K562 (cell line): ENCODE measurements at regions of chr17 and their contacts with region 1.

Region 1: GRCh38 chr17:51000835-51001638 is 119.6 kb downstream of the SPAG9 start:
- DNase-seq: peak in 2 of 4 experiments; percentile 23 to 59
- ATAC-seq: peak; percentile 83
- H3K4me3 ChIP-seq: no peak overlapping the region
- H3K27ac ChIP-seq: no peak overlapping the region
- H3K4me1 ChIP-seq: no peaks in the 10 kb centered on the region
- H3K27me3 ChIP-seq: no peaks in the 10 kb centered on the region
- CTCF ChIP-seq: peak in 2 of 3 experiments; percentile 11 to 63; a peak in 3 of 6 replicates
- EP300 ChIP-seq: no peak
- POLR2A ChIP-seq: no peak
- RAD21 ChIP-seq: peak; percentile 72 to 78

Region 2: GRCh38 chr17:50956750-50957523 is 44.1 kb before region 1 on chr17:
- CTCF ChIA-PET with region 1: no interaction called
- POLR2A ChIA-PET with region 1: no interaction called
- in situ Hi-C with region 1: no loop called
- intact Hi-C with region 1: no loop called
- DNase-seq: peak; percentile 73 to 78 (median 76)
- ATAC-seq: peak; percentile 95
- H3K4me3 ChIP-seq: no peak overlapping the region
- H3K27ac ChIP-seq: no peak overlapping the region
- H3K4me1 ChIP-seq: peaks cover 0 to 14% of the 10 kb centered on the region in 2 experiments; a peak in 3 of 5 replicates
- H3K27me3 ChIP-seq: no peaks in the 10 kb centered on the region
- CTCF ChIP-seq: peak; percentile 78 to 92 (median 79)
- EP300 ChIP-seq: no peak
- POLR2A ChIP-seq: no peak
- RAD21 ChIP-seq: peak; percentile 68 to 76

Region 3: GRCh38 chr17:51056813-51057510 is 55.9 kb after region 1 on chr17:
- CTCF ChIA-PET with region 1: no interaction called
- POLR2A ChIA-PET with region 1: no interaction called
- in situ Hi-C with region 1: no loop called
- intact Hi-C with region 1: loop called (anchors 2 kb)
- DNase-seq: peak; percentile 19 to 55 (median 29)
- ATAC-seq: peak; percentile 86
- H3K4me3 ChIP-seq: no peak overlapping the region
- H3K27ac ChIP-seq: peak overlapping the region; percentile 58; the same call in 2 of the 3 replicates
- H3K4me1 ChIP-seq: no peaks in the 10 kb centered on the region; a peak in 2 of 5 replicates
- H3K27me3 ChIP-seq: no peaks in the 10 kb centered on the region
- CTCF ChIP-seq: peak; percentile 15 to 64 (median 43); a peak in 3 of 6 replicates
- EP300 ChIP-seq: no peak
- POLR2A ChIP-seq: no peak
- RAD21 ChIP-seq: peak; percentile 29 to 49; a peak in 2 of 4 replicates

Region 4: DNA sequence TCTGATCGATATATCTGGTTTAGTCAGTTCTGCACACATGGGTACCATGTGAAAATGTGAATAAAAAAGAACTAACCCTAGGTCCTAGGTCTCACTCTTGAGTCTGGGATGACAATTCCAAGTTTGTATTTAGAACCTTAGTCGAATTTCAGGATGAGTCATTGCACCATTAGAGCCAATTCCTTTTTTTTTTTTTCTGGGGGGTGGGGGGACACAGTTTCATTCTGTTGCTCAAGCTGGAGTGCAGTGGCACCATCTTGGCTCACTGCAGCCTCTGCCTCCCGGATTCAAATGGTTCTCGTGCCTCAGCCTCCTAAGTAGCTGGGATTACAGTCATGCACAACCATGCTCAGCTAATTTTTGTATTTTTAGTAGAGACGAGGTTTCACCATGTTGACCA is 78.0 kb after region 1 on chr17:
- CTCF ChIA-PET with region 1: no interaction called
- POLR2A ChIA-PET with region 1: no interaction called
- in situ Hi-C with region 1: no loop called
- intact Hi-C with region 1: no loop called
- DNase-seq: no peak
- ATAC-seq: no peak
- H3K4me3 ChIP-seq: no peak overlapping the region
- H3K27ac ChIP-seq: no peak overlapping the region
- H3K4me1 ChIP-seq: no peaks in the 10 kb centered on the region
- H3K27me3 ChIP-seq: no peaks in the 10 kb centered on the region
- CTCF ChIP-seq: no peak
- EP300 ChIP-seq: no peak
- POLR2A ChIP-seq: no peak
- RAD21 ChIP-seq: no peak

Region 5: GRCh38 chr17:51147650-51148049 is 146.6 kb after region 1 on chr17:
- CTCF ChIA-PET with region 1: interaction called, 31 read pairs
- POLR2A ChIA-PET with region 1: interaction called, 3 read pairs
- in situ Hi-C with region 1: loop called (anchors 5 kb)
- intact Hi-C with region 1: no loop called
- DNase-seq: no peak
- ATAC-seq: no peak
- H3K4me3 ChIP-seq: no peak overlapping the region
- H3K27ac ChIP-seq: 0 out of 3 replicates have a peak overlapping the region, but pooled peaks have one; percentile 22
- H3K4me1 ChIP-seq: peaks cover 7 to 8% of the 10 kb centered on the region in 2 experiments; a peak in 3 of 5 replicates
- H3K27me3 ChIP-seq: no peaks in the 10 kb centered on the region
- CTCF ChIP-seq: no peak
- EP300 ChIP-seq: no peak
- POLR2A ChIP-seq: no peak
- RAD21 ChIP-seq: no peak